ENCODE measurements at regions of chr6 and their contacts with region 1.

Region 1: DNA sequence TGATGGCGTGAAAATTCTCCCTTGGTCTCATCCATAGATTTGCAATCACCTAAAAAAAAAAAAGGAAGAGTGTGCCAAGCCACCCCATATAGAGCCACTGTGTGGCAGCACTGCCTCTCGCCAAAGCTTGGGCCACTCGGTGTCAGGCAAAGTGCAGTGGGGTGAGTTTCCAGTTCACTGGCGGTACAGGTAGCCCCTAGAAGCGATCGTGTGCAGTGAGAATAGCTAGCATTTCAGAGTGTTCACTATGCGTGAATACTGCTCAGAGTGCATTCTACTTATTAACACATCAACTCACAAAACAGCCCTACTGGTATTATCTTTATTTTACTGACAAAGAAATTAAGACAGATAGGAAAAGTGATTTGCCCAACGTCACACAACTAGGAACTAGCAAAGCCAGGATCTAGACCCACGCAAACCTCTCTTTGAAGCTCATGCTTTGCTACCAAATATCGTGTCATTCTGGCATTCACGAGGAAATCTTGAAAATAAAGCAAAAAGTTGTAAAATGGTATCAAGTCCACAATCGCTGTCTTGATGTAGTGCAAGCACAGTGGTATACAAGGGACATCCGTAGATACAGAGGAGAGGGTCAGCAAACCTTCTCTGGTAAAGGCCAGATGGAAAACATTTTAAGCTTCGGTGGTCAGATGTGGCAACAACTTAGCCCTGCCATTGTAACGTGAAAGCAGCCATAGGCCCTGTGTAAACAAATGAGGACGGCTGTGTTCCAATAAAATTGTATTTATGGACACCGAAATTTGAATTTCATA is 10.4 kb upstream of the GCNT2 start:
- DNase-seq: peak; percentile 70
- ATAC-seq: peak; percentile 97
- H3K4me3 Mint-ChIP-seq: no peak overlapping the region
- H3K27ac Mint-ChIP-seq: no peak overlapping the region
- H3K4me1 Mint-ChIP-seq: no peaks in the 10 kb centered on the region
- H3K27me3 Mint-ChIP-seq: peaks cover 2% of the 10 kb centered on the region
- CTCF ChIP-seq: peak; percentile 69

Region 2: GRCh38 chr6:10800829-10801535 is 290.2 kb after region 1 on chr6:
- CTCF ChIA-PET with region 1: interaction called, 8 read pairs
- POLR2A ChIA-PET with region 1: no interaction called
- intact Hi-C with region 1: loop called (anchors 10 kb)
- DNase-seq: peak; percentile 62
- ATAC-seq: peak; percentile 94
- H3K4me3 Mint-ChIP-seq: no peak overlapping the region
- H3K27ac Mint-ChIP-seq: no peak overlapping the region
- H3K4me1 Mint-ChIP-seq: no peaks in the 10 kb centered on the region
- H3K27me3 Mint-ChIP-seq: no peaks in the 10 kb centered on the region
- CTCF ChIP-seq: peak; percentile 92